Heart right ventricle (tissue), 16 donors: ENCODE measurements at regions of chr16 and their contacts with region 1.

Region 1: DNA sequence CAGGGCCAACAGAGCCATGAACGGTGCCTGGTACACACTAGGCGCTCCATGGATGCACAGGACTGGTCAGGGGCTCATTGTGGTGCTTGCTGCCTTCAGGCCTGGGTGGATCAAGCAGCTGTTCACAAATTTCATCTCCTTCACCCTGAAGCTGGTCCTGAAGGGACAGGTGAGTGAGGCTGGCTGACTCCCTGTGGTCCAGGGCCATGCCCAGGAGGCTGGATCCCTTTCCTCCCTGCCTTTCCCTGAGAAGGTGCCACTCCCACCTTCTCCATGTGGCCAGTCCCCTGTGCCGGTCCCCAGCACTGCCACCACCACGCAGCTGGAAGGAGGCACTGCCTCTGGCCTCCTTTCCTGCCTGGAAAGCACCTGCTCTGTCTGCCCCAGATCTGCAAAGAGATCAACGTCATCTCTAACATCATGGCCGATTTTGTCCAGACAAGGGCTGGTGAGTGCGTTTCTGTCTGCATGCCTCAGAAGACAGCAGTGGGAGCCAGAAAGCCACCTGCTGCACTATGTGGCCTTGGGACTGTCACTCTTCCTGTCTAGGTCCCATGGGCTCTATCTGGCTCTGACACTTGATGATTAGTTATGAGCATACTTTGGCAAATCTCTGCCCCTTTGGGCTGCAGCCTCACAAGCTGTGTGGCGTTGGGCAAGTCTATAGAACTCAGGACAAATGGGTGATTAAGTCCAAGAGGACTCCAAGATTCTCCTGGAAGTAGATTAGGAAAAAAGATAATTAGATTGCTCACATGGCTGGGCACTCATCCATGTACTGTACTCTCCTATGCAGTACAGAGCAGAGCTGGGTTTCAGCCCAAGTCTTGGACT is 9.4 kb downstream of the CETP start:
- DNase-seq: no peak
- ATAC-seq: peak in 2 of 8 donors; percentile 23 to 27
- H3K4me3 ChIP-seq: no peak overlapping the region
- H3K27ac ChIP-seq: no peak overlapping the region
- H3K4me1 ChIP-seq: peaks cover 2 to 49% (median 6%) of the 10 kb centered on the region in 9 donors
- H3K27me3 ChIP-seq: no peaks in the 10 kb centered on the region
- CTCF ChIP-seq: no peak

Region 2: GRCh38 chr16:57023541-57024249 is 52.5 kb after region 1 on chr16:
- intact Hi-C with region 1: loop called in 4 of 10 experiments (anchors 5 to 10 kb)
- DNase-seq: no peak
- ATAC-seq: no peak
- H3K4me3 ChIP-seq: no peak overlapping the region
- H3K27ac ChIP-seq: peak overlapping the region in 1 of 10 donors; percentile 50
- H3K4me1 ChIP-seq: peaks cover 0 to 50% (median 0%) of the 10 kb centered on the region in 9 donors
- H3K27me3 ChIP-seq: no peaks in the 10 kb centered on the region
- CTCF ChIP-seq: no peak

Region 3: DNA sequence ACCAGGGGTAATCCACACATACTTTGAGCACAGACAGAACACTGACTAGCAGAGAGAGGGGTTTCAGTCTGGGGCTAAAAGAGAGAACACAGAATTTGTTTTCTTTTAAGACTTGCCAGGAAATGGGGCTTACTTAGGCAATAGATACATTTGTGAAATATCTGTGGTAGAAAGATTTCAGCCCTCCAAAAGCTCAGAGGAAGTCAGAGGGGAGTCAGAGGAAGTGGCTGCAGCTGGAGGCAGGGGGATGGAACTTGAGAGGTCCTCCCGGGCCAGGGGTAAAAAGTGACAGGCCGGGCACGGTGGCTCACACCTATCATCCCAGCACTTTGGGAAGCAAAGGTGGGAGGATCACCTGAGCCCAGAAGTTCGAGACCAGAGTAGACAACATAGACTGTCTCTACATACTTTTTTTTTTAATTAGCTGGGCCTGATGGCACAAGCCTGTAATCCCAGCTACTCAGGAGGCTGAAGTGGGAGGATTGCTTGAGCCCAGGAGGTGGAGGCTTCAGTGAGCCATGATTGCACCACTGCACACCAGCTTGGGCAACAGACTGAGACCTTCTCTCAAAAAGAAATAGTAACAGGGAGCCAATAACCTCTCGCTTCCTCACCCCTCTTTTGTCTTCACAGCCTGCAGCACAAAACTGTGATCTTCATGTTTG is 68.1 kb after region 1 on chr16:
- intact Hi-C with region 1: loop called in 5 of 10 experiments (anchors 2 to 10 kb)
- DNase-seq: no peak
- ATAC-seq: peak in 2 of 8 donors; percentile 18 to 30
- H3K4me3 ChIP-seq: peak overlapping the region in 1 of 10 donors; percentile 23
- H3K27ac ChIP-seq: peak overlapping the region in 3 of 10 donors; percentile 1 to 86 (median 29)
- H3K4me1 ChIP-seq: peaks cover 0 to 72% (median 14%) of the 10 kb centered on the region in 9 donors
- H3K27me3 ChIP-seq: no peaks in the 10 kb centered on the region
- CTCF ChIP-seq: no peak

Region 4: DNA sequence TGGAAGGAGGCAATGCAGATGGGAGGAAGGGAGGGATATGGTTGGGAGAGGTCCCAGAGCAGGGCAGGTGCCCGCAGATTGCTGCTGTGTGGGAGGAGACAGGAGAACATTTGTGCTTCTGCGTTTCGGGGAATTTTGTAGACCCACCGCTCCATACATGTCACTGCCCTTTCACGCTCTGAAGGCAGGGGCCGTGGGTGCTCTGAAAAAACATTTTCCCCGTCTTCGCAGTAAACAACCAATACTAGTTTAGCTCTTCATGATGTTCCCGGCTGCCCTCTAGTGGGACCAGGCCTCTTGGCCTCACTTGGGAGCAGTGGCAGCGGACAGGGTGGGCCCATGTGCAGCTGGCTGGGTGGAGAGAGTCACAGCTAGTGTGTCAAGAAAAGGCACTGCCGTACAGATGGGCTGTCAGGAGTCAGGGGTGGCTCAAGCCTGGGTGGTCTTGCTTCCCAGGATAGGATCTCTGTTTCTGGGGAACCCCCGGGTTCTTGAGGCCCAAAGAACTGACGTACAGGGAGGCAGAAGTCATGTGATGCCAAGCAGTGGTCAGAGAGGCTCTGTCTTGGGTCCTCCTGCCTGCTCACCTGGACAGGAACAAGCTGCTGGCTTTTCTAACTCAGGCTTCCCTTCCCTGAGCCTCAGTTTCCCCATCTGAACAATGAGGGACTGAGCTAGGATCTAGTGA is 74.7 kb after region 1 on chr16:
- intact Hi-C with region 1: loop called in 6 of 10 experiments (anchors 2 to 10 kb)
- DNase-seq: peak; percentile 71 to 73
- ATAC-seq: peak; percentile 55 to 83 (median 70)
- H3K4me3 ChIP-seq: peak overlapping the region in 2 of 10 donors; percentile 6 to 27
- H3K27ac ChIP-seq: peak overlapping the region in 1 of 10 donors; percentile 36
- H3K4me1 ChIP-seq: peaks cover 0 to 45% (median 11%) of the 10 kb centered on the region in 9 donors
- H3K27me3 ChIP-seq: no peaks in the 10 kb centered on the region
- CTCF ChIP-seq: peak; percentile 23 to 77 (median 65)